AG04450 (cell line): ENCODE measurements at regions of chr1 and their contacts with region 1.

Region 1: DNA sequence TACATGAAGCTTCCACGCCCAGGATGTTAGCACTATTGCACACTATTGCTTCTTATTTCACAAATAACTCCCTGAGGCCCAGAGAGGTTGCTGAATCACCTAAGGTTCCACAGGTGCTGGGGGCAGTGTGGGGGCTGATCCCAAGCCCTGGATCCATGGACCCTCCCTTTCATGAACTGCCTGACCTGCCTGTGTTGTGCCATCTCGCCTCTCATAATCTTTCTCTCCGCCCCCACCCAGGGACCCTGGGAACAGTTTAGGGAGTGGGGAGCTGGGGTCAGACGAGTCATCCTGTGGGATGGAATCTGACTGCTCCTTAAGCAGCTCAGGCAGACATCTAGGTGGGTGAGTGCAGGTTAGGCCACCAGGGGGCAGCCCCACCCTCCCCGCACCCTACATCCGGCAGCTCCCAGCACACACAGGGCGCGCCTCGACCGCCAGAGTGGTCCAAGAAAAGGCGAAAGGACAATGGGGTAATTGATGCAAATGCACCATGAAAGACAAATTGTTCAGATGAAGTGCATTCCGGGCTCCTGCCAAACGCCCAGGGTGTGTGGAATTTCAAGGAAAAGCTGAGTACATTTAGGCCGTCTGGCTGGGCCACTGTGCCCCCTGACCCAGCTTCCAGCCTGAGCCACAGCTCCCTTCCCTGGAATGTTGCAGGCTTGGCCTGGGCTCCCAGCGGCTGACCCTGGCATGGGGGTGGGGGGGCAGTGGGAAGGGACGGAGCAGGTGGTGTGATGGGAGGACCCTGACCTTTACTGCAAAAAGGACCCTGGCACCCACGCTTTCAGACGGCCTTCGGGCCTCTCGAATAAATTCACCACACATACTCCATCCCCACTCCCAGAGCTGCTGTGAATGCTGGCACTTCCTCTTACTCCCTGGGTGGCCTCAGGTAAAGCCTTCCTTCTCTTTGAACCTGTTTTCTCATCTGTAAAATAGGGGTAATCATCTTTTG is 20.8 kb downstream of the PHLDA3 start:
- DNase-seq: peak; percentile 33
- H3K4me3 ChIP-seq: no peak overlapping the region
- H3K27ac ChIP-seq: no peak overlapping the region
- H3K27me3 ChIP-seq: no peaks in the 10 kb centered on the region
- CTCF ChIP-seq: peak; percentile 82

Region 2: GRCh38 chr1:201329286-201329685 is 118.9 kb before region 1 on chr1:
- CTCF ChIA-PET with region 1: no interaction called
- POLR2A ChIA-PET with region 1: no interaction called
- DNase-seq: peak; percentile 13
- H3K4me3 ChIP-seq: no peak overlapping the region
- H3K27ac ChIP-seq: no peak overlapping the region
- H3K27me3 ChIP-seq: peaks cover 46% of the 10 kb centered on the region
- CTCF ChIP-seq: no peak

Region 3: GRCh38 chr1:201419746-201420607 is 28.2 kb before region 1 on chr1:
- CTCF ChIA-PET with region 1: no interaction called
- POLR2A ChIA-PET with region 1: no interaction called
- DNase-seq: no peak
- H3K4me3 ChIP-seq: no peak overlapping the region
- H3K27ac ChIP-seq: no peak overlapping the region
- H3K27me3 ChIP-seq: peaks cover 50% of the 10 kb centered on the region
- CTCF ChIP-seq: no peak

Region 4: GRCh38 chr1:201436393-201436792 is 11.8 kb before region 1 on chr1:
- CTCF ChIA-PET with region 1: interaction called, 67 read pairs
- POLR2A ChIA-PET with region 1: no interaction called
- DNase-seq: no peak
- H3K4me3 ChIP-seq: no peak overlapping the region
- H3K27ac ChIP-seq: no peak overlapping the region
- H3K27me3 ChIP-seq: peaks cover 4% of the 10 kb centered on the region
- CTCF ChIP-seq: peak; percentile 36

Region 5: GRCh38 chr1:201481761-201482493 is 33.7 kb after region 1 on chr1:
- CTCF ChIA-PET with region 1: interaction called, 29 read pairs
- POLR2A ChIA-PET with region 1: interaction called, 4 read pairs
- DNase-seq: no peak
- H3K4me3 ChIP-seq: no peak overlapping the region
- H3K27ac ChIP-seq: no peak overlapping the region
- H3K27me3 ChIP-seq: no peaks in the 10 kb centered on the region
- CTCF ChIP-seq: peak; percentile 82

Region 6: GRCh38 chr1:201488817-201489589 is 40.8 kb after region 1 on chr1:
- CTCF ChIA-PET with region 1: interaction called, 10 read pairs
- POLR2A ChIA-PET with region 1: no interaction called
- DNase-seq: peak; percentile 78
- H3K4me3 ChIP-seq: no peak overlapping the region
- H3K27ac ChIP-seq: peak overlapping the region; percentile 80
- H3K27me3 ChIP-seq: no peaks in the 10 kb centered on the region
- CTCF ChIP-seq: no peak

Region 7: GRCh38 chr1:201673915-201674314 is 225.7 kb after region 1 on chr1:
- CTCF ChIA-PET with region 1: no interaction called
- POLR2A ChIA-PET with region 1: no interaction called
- DNase-seq: no peak
- H3K4me3 ChIP-seq: no peak overlapping the region
- H3K27ac ChIP-seq: peak overlapping the region; percentile 2
- H3K27me3 ChIP-seq: no peaks in the 10 kb centered on the region
- CTCF ChIP-seq: no peak

Region 8: GRCh38 chr1:202405928-202406327 is 957.7 kb after region 1 on chr1:
- CTCF ChIA-PET with region 1: no interaction called
- POLR2A ChIA-PET with region 1: no interaction called
- DNase-seq: no peak
- H3K4me3 ChIP-seq: no peak overlapping the region
- H3K27ac ChIP-seq: no peak overlapping the region
- H3K27me3 ChIP-seq: no peaks in the 10 kb centered on the region
- CTCF ChIP-seq: no peak